ENCODE measurements at regions of chr11 and their contacts with region 1.

Region 1: GRCh38 chr11:96342961-96343711 is at the start of gene MAML2:
- DNase-seq: peak; percentile 92 to 95 (median 93)
- ATAC-seq: peak; percentile 88 to 97 (median 94)
- H3K4me3 ChIP-seq: peak within 1 kb of the TSS; percentile 54 to 80 (median 71)
- H3K27ac ChIP-seq: peak within 1 kb of the TSS in 11 of 12 donors; percentile 74 to 92 (median 79)
- H3K4me1 ChIP-seq: peaks cover 0 to 45% (median 28%) of the 10 kb centered on the region in 12 donors
- H3K27me3 ChIP-seq: no peaks in the 10 kb centered on the region
- CTCF ChIP-seq: peak; percentile 85 to 99 (median 96)
- POLR2A ChIP-seq: no peak
- total RNA-seq, gene MAML2: 2.1 to 10.8 (median 6.1) TPM

Region 2: DNA sequence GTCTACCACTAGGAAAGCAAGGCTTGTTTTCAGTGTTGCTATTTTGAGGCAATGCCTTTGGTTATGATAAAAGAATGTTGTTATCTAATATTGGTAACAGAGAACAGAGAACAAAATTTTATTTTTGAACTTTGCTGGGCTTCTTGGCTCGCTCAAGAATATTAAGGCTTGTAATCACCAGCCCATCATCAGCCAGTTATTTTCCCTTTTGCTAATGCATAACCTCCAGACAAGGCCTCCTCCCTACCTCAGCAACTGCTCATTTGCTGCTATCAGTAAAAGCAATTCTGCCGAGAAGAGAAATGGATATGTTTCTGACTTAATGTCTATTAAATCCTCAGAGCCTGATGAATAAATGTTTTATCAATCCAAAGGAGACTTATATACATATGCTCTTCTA is 428.1 kb before region 1 on chr11:
- intact Hi-C with region 1: loop called in 2 of 10 experiments (anchors 2 to 5 kb)
- DNase-seq: no peak
- ATAC-seq: peak in 3 of 4 donors; percentile 21 to 45 (median 38)
- H3K4me3 ChIP-seq: no peak overlapping the region
- H3K27ac ChIP-seq: peak overlapping the region in 10 of 12 donors; percentile 8 to 68 (median 40)
- H3K4me1 ChIP-seq: peaks cover 0 to 68% (median 40%) of the 10 kb centered on the region in 12 donors
- H3K27me3 ChIP-seq: no peaks in the 10 kb centered on the region
- CTCF ChIP-seq: no peak
- POLR2A ChIP-seq: no peak

Region 3: GRCh38 chr11:96054870-96055705 is 288.0 kb before region 1 on chr11:
- intact Hi-C with region 1: loop called (anchors 1 to 5 kb)
- DNase-seq: no peak
- ATAC-seq: peak in 2 of 4 donors; percentile 63 to 79
- H3K4me3 ChIP-seq: no peak overlapping the region
- H3K27ac ChIP-seq: peak overlapping the region in 1 of 12 donors; percentile 11
- H3K4me1 ChIP-seq: peaks cover 0 to 62% (median 5%) of the 10 kb centered on the region in 12 donors
- H3K27me3 ChIP-seq: no peaks in the 10 kb centered on the region
- CTCF ChIP-seq: peak; percentile 43 to 79 (median 66)
- POLR2A ChIP-seq: no peak

Region 4: DNA sequence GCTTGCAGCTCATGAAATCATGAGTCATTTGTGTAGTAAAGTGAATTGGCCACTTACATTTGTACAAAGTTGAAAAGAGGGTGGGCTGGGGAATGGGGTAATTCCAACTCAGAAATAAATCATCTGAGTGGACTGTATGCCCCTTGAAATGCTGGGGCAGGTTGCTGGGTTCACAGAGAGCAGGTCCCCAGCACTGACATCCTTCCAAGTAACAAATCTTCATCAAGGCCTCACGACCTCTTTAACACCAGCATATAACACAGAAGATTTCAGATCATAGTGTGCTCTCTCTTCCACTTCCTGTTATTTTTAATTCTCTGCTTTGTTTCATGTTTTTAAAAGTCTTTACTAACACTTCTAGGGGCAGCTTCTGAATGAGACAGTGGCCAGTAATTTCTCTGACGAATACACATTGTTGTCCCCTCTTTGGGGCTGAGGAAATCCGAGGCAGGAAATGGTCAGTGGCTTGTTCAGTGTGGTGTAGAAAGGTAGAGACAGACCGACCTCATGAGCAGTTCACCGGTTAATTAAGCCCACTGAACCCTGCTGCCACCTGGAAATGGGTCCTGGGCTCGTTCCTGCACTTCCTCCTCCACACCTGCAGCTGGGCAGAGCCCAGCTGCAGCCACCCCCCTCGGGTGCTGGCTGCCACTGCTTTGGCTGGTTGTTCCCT is 127.9 kb before region 1 on chr11:
- intact Hi-C with region 1: loop called in 2 of 10 experiments (anchors 2 to 10 kb)
- DNase-seq: no peak
- ATAC-seq: peak; percentile 22 to 49 (median 43)
- H3K4me3 ChIP-seq: no peak overlapping the region
- H3K27ac ChIP-seq: peak overlapping the region; percentile 33 to 92 (median 68)
- H3K4me1 ChIP-seq: peaks cover 4 to 95% (median 64%) of the 10 kb centered on the region in 12 donors
- H3K27me3 ChIP-seq: no peaks in the 10 kb centered on the region
- CTCF ChIP-seq: no peak
- POLR2A ChIP-seq: no peak

Region 5: GRCh38 chr11:96254087-96254486 is 89.0 kb before region 1 on chr11:
- intact Hi-C with region 1: loop called in 4 of 10 experiments (anchors 5 kb)
- DNase-seq: peak in 4 of 5 donors; percentile 42 to 71 (median 53)
- ATAC-seq: peak in 3 of 4 donors; percentile 43 to 79 (median 65)
- H3K4me3 ChIP-seq: peak overlapping the region in 6 of 12 donors; percentile 8 to 30 (median 20)
- H3K27ac ChIP-seq: peak overlapping the region; percentile 12 to 73 (median 41)
- H3K4me1 ChIP-seq: peaks cover 0 to 63% (median 46%) of the 10 kb centered on the region in 12 donors
- H3K27me3 ChIP-seq: no peaks in the 10 kb centered on the region
- CTCF ChIP-seq: no peak
- POLR2A ChIP-seq: no peak

Region 6: DNA sequence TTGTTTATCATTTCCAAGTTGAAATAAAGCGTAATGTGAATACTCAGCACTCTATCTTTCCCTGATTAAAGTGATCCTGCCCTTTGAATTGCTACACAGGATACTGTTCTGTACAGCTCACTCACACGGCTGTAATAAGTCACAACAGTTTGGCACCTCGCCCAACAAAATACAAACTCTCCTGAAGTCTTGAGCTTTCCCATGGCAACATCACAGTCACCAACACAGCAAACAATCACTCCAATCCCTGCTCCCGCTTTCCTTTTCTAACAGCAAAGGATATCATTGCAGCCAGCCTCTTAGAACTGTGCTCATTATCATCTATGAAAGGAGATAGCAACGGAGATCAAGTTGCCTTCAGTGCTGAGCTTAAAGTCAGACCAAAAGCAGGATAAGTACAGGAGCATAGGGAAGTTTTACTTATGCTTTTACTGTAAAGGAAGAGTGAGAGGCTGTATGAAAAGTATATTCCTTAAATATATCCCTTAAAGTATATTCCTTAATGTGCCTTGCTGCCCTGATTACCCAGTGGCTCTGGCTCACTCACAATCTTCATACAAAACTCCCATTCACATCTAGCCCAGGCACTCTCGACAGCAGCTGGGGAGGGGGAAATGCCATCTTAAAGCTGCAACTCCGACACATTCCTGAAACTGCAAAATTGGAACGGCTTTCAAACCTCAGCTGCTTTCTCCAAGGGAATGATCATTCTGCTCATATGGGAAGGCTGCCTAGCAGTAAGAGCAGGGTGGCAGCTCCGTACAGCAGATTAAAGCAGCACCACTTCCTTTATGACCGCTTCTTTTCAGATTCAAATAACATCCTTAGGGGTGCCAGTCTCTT is 36.0 kb before region 1 on chr11:
- intact Hi-C with region 1: loop called in 4 of 10 experiments (anchors 2 to 5 kb)
- DNase-seq: peak in 4 of 5 donors; percentile 87 to 90 (median 88)
- ATAC-seq: peak; percentile 90 to 97 (median 94)
- H3K4me3 ChIP-seq: peak overlapping the region in 10 of 12 donors; percentile 13 to 48 (median 35)
- H3K27ac ChIP-seq: peak overlapping the region; percentile 34 to 85 (median 76)
- H3K4me1 ChIP-seq: peaks cover 9 to 96% (median 54%) of the 10 kb centered on the region in 12 donors
- H3K27me3 ChIP-seq: no peaks in the 10 kb centered on the region
- CTCF ChIP-seq: no peak
- POLR2A ChIP-seq: peak in 1 of 2 donors; percentile 24